Caco-2 (cell line): ENCODE measurements at regions of chr17 and their contacts with region 1.

Region 1: GRCh38 chr17:31457391-31458234 is 66.1 kb downstream of the RAB11FIP4 start:
- DNase-seq: peak; percentile 89 to 95
- H3K4me3 ChIP-seq: 0 out of 2 replicates have a peak overlapping the region, but pooled peaks have one; percentile 6
- H3K4me3 Mint-ChIP-seq: peak overlapping the region; percentile 56
- H3K27ac Mint-ChIP-seq: peak overlapping the region; percentile 87
- H3K4me1 ChIP-seq: peaks cover 55% of the 10 kb centered on the region
- H3K4me1 Mint-ChIP-seq: peaks cover 35% of the 10 kb centered on the region
- H3K27me3 ChIP-seq: no peaks in the 10 kb centered on the region
- H3K27me3 Mint-ChIP-seq: no peaks in the 10 kb centered on the region
- CTCF ChIP-seq: no peak

Region 2: DNA sequence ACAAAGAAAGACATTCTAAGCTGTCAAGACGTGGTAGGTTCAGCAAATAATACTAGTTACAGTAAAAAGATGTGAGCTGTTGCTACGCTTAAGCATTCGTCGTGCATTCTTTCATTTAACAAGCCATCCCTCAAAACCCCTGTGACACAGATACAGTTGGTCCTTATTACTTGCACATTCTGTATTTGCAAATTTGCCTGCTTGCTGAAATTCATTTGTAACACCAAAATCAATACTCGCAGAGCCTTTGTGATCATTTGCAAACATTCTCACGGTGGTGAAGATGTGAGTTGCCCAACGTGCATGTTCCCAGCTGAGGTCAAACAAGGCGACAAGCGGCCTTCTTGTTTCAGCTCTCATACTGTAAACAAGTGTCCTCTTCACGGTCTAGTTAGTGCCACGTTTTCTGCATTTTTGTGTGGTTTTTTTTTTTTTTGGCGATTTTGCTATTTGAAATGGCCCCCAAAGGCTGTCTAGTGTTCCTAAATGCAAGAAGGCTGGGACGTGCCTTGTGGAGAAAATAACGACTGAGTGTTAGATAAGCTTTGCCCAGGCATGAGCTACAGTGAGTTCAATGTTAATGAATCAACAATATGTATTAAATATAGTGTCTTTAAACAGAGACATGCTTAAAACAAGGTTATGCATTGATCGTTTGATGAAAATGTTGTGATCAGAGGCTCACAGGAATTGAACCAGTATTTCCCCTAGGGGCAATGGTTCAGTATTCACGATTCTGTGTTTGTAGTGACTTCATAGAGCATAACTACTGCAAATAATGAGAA is 18.0 kb after region 1 on chr17:
- CTCF ChIA-PET with region 1: interaction called, 7 read pairs
- POLR2A ChIA-PET with region 1: interaction called, 11 read pairs
- intact Hi-C with region 1: loop called (anchors 2 kb)
- DNase-seq: peak in 1 of 2 experiments; percentile 41
- H3K4me3 ChIP-seq: no peak overlapping the region
- H3K4me3 Mint-ChIP-seq: no peak overlapping the region
- H3K27ac Mint-ChIP-seq: no peak overlapping the region
- H3K4me1 ChIP-seq: peaks cover 7% of the 10 kb centered on the region
- H3K4me1 Mint-ChIP-seq: peaks cover 18% of the 10 kb centered on the region
- H3K27me3 ChIP-seq: no peaks in the 10 kb centered on the region
- H3K27me3 Mint-ChIP-seq: no peaks in the 10 kb centered on the region
- CTCF ChIP-seq: no peak